GM12878 (cell line): ENCODE measurements at regions of chr5 and their contacts with region 1.

Region 1: GRCh38 chr5:161960314-161960713 is 107.3 kb upstream of the GABRG2 start:
- DNase-seq: no peak
- ATAC-seq: no peak
- H3K4me3 ChIP-seq: no peak overlapping the region
- H3K27ac ChIP-seq: no peak overlapping the region
- H3K4me1 ChIP-seq: no peaks in the 10 kb centered on the region
- H3K27me3 ChIP-seq: no peaks in the 10 kb centered on the region
- CTCF ChIP-seq: no peak
- EP300 ChIP-seq: no peak
- POLR2A ChIP-seq: no peak
- RAD21 ChIP-seq: no peak

Region 2: DNA sequence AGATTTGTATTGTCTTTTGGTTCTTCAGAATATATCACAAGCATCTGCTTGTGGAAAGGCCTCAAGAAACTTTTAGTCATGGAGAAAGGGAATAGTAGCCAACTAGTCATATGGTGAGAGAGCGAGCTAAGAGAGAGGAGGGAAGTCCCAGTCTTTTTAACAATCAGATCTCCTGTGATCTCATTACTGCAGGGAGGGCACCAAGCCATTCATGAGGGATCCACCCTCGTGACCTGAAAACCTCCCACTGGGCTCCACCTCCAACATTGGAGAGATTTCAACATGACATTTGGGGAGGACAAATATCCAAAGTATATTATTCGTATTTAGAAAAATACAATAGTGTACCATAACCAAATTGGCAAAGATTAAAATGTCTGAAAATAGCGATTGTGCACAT is 13.4 kb before region 1 on chr5:
- CTCF ChIA-PET with region 1: no interaction called
- POLR2A ChIA-PET with region 1: no interaction called
- RAD21 ChIA-PET with region 1: no interaction called
- SMC1A ChIA-PET with region 1: no interaction called
- in situ Hi-C with region 1: no loop called
- intact Hi-C with region 1: no loop called
- DNase-seq: no peak
- ATAC-seq: no peak
- H3K4me3 ChIP-seq: no peak overlapping the region
- H3K27ac ChIP-seq: no peak overlapping the region
- H3K4me1 ChIP-seq: no peaks in the 10 kb centered on the region
- H3K27me3 ChIP-seq: no peaks in the 10 kb centered on the region
- CTCF ChIP-seq: no peak
- EP300 ChIP-seq: no peak
- POLR2A ChIP-seq: no peak
- RAD21 ChIP-seq: no peak

Region 3: GRCh38 chr5:162786234-162786633 is 825.9 kb after region 1 on chr5:
- CTCF ChIA-PET with region 1: no interaction called
- POLR2A ChIA-PET with region 1: no interaction called
- RAD21 ChIA-PET with region 1: no interaction called
- SMC1A ChIA-PET with region 1: no interaction called
- in situ Hi-C with region 1: no loop called
- intact Hi-C with region 1: loop called (anchors 5 kb)
- DNase-seq: no peak
- ATAC-seq: no peak; the same call in 2 of the 3 replicates
- H3K4me3 ChIP-seq: no peak overlapping the region
- H3K27ac ChIP-seq: no peak overlapping the region
- H3K4me1 ChIP-seq: no peaks in the 10 kb centered on the region
- H3K27me3 ChIP-seq: no peaks in the 10 kb centered on the region
- CTCF ChIP-seq: no peak
- EP300 ChIP-seq: no peak
- POLR2A ChIP-seq: no peak
- RAD21 ChIP-seq: no peak